AG04450 (cell line): ENCODE measurements at regions of chr4 and their contacts with region 1.

Region 1: GRCh38 chr4:121696581-121697461 is at the start of gene ANXA5:
- DNase-seq: peak; percentile 72
- H3K4me3 ChIP-seq: peak within 1 kb of the TSS; percentile 96
- H3K27ac ChIP-seq: peak within 1 kb of the TSS; percentile 98
- H3K27me3 ChIP-seq: no peaks in the 10 kb centered on the region
- CTCF ChIP-seq: peak; percentile 53
- polyA plus RNA-seq, gene ANXA5: 1,739 and 2,093 TPM in 2 replicates

Region 2: DNA sequence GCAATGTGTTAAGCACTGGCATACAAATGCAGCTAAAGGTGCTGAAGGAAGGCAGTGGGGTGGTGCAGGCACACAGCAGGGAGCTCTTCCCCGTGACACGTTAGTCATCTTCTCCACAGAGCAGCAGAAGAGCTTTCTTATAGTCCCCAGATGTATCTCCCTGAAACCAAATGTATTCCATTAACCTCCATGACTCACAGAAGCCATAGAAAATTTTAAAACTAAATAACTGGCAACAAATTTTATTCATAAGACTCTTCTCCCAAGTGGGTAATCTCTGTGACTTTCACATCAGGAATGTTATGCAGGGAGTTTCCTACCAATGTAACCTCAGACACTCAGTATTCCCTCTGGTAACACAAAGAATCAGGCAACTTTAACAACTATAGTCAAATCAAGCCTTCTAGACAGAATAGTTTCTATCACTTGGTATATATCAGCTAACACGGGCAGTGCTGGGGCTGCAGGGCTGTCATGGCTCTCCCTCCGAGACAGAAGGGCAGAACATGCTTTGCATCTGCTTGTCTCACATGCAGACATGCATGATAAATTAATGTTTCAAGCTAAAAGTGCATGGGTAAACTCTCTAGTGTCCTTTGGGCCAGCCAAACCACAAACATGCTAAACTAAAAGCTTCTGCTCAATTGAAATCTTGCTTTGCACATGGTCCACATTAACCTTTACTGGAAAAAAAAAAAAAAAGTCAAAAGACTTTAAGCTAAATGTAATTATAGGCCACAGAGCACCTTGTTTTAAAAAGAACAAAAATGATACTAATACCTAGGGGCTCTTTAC is 28.3 kb before region 1 on chr4:
- CTCF ChIA-PET with region 1: interaction called, 3 read pairs
- POLR2A ChIA-PET with region 1: interaction called, 24 read pairs
- DNase-seq: peak; percentile 91
- H3K4me3 ChIP-seq: no peak overlapping the region
- H3K27ac ChIP-seq: peak overlapping the region; percentile 98
- H3K27me3 ChIP-seq: no peaks in the 10 kb centered on the region
- CTCF ChIP-seq: no peak

Region 3: GRCh38 chr4:121686255-121686654 is 10.6 kb before region 1 on chr4:
- CTCF ChIA-PET with region 1: no interaction called
- POLR2A ChIA-PET with region 1: interaction called, 17 read pairs
- DNase-seq: no peak
- H3K4me3 ChIP-seq: no peak overlapping the region
- H3K27ac ChIP-seq: no peak overlapping the region
- H3K27me3 ChIP-seq: no peaks in the 10 kb centered on the region
- CTCF ChIP-seq: no peak

Region 4: GRCh38 chr4:121711263-121712000 is 14.6 kb after region 1 on chr4:
- CTCF ChIA-PET with region 1: interaction called, 4 read pairs
- POLR2A ChIA-PET with region 1: interaction called, 39 read pairs
- DNase-seq: peak; percentile 94
- H3K4me3 ChIP-seq: peak overlapping the region; percentile 55
- H3K27ac ChIP-seq: peak overlapping the region; percentile 89
- H3K27me3 ChIP-seq: no peaks in the 10 kb centered on the region
- CTCF ChIP-seq: no peak

Region 5: DNA sequence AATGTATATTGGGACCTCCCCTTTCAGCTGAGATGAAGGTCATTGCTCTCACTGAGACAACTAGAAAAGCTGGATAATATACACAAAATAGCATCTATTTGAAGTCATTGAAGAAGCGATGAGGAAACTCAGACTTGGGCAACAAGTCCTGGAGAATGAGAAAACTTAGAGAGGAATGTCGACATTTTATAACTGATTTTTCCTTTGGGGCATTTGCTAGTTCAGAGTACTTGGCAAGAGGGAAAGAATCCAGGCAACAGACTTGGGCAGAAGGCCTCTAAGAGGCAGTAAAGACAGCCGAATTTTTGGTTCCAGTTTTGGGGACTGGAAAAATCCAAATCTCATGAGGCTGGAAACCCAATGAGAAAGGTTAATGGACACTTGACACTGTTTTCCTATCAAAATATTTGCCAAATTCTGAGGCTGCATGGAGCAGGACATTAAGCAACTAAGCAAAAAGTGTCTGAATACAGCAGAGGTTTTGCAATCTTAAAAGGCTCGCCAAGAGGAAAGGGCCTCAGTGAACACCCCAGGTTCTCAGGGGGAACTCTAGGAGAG is 20.9 kb after region 1 on chr4:
- CTCF ChIA-PET with region 1: interaction called, 4 read pairs
- POLR2A ChIA-PET with region 1: interaction called, 12 read pairs
- DNase-seq: no peak
- H3K4me3 ChIP-seq: no peak overlapping the region
- H3K27ac ChIP-seq: peak overlapping the region; percentile 33
- H3K27me3 ChIP-seq: no peaks in the 10 kb centered on the region
- CTCF ChIP-seq: no peak

Region 6: GRCh38 chr4:121726642-121727268 is 29.9 kb after region 1 on chr4:
- CTCF ChIA-PET with region 1: interaction called, 6 read pairs
- POLR2A ChIA-PET with region 1: interaction called, 15 read pairs
- DNase-seq: no peak
- H3K4me3 ChIP-seq: no peak overlapping the region
- H3K27ac ChIP-seq: no peak overlapping the region
- H3K27me3 ChIP-seq: no peaks in the 10 kb centered on the region
- CTCF ChIP-seq: peak; percentile 75

Region 7: DNA sequence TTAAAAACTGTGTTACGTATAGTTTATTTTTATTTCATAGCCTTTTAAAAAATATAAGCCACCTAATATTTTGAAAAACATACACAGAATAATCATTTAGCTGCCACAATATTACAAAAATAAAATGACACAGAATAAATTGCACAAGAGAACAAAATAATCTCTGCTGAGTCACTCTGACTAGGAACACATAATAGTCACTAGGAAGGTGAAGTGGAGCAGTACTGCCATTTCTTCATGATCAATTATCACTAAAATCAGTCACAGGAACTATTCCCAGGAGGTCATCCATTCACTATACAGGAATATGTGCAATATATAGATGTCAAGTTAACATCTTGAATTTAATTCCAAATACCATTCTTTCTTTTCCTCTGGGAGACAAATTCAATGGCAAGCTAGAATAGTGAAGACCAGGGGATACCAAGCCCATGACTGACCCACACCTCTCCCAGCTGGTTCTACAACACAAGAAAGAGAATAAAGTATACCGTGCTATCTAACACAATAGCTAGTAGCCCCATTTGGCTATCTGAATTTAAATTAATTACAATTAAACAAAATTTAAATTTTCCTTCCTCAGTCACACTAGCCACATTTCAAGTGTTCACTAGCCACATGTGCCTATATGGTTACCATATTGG is 62.2 kb after region 1 on chr4:
- CTCF ChIA-PET with region 1: no interaction called
- POLR2A ChIA-PET with region 1: no interaction called
- DNase-seq: no peak
- H3K4me3 ChIP-seq: no peak overlapping the region
- H3K27ac ChIP-seq: no peak overlapping the region
- H3K27me3 ChIP-seq: no peaks in the 10 kb centered on the region
- CTCF ChIP-seq: no peak

Region 8: DNA sequence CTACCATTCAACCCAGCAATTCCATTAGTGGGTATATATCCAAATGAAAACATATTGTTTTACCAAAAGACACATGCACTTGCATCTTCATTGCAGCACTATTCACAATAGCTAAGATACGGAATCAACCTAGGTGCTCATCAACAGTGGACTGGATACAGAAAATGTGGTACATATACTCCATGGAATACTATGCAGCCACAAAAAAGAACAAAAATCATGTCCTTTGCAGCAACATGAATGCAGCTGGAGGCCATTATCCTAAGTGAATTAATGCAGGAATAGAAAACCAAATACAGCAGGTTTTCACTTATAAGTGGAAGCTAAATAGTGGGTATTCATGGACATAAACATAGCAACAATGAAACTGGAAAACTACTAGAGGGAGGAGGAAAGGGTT is 211.5 kb after region 1 on chr4:
- CTCF ChIA-PET with region 1: no interaction called
- POLR2A ChIA-PET with region 1: no interaction called
- DNase-seq: no peak
- H3K4me3 ChIP-seq: no peak overlapping the region
- H3K27ac ChIP-seq: no peak overlapping the region
- H3K27me3 ChIP-seq: no peaks in the 10 kb centered on the region
- CTCF ChIP-seq: no peak

Region 9: DNA sequence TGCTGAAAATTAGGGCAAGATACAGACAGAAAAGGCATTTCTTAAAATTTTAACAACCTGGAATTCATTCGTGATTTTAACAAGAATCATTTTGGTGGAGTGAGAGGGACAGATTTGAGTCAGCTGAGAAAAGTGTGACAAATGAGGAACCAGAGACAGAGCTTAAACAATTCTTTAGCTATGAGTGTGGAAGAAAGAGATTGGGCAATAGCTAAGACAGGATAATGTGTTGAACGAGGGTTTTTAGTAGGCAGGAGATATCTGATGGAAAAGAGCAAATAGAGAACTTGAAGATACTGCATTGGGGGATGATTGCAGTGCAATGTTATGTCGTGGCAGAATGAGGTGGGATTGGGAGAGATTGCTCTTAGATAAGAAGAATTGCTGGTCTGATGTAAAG is 1535.6 kb after region 1 on chr4:
- CTCF ChIA-PET with region 1: no interaction called
- POLR2A ChIA-PET with region 1: no interaction called
- DNase-seq: no peak
- H3K4me3 ChIP-seq: no peak overlapping the region
- H3K27ac ChIP-seq: no peak overlapping the region
- H3K27me3 ChIP-seq: no peaks in the 10 kb centered on the region
- CTCF ChIP-seq: no peak